Activated CD8-positive, alpha-beta T cell treated with anti-CD3 and anti-CD28 coated beads, Interleukin-2, amount 10 ng/mL, durations not matched to agents 7 days and 5 days (primary cell): ENCODE measurements at regions of chr1 and their contacts with region 1.

Region 1: DNA sequence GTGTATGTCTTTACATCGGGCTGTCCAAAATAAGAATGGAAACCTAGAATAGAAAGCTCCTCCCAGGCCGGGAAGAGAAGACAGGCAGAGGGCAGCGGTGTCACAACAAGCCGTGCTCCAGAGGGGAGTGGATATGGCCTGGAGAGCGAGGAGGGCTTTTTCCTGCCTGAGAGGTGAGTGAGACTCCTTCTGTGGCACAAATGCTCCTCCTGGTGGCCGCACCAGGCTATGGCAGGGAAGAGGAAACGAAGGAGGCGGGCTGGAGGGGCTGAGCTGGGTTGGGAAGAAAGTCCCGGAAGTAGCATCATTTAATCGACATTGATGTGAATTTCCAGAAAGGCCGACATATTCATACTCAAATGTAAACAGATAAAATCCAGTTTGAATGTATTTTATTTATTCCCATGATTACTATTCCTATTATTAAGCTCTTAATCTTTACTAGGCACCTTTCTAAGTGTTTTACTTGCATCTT is 54.7 kb downstream of the MEF2D start:
- DNase-seq: peak; percentile 84
- ATAC-seq: peak; percentile 89
- H3K4me3 Mint-ChIP-seq: no peak overlapping the region
- H3K27ac Mint-ChIP-seq: no peak overlapping the region
- H3K4me1 Mint-ChIP-seq: peaks cover 9% of the 10 kb centered on the region
- H3K27me3 Mint-ChIP-seq: peaks cover 57% of the 10 kb centered on the region

Region 2: DNA sequence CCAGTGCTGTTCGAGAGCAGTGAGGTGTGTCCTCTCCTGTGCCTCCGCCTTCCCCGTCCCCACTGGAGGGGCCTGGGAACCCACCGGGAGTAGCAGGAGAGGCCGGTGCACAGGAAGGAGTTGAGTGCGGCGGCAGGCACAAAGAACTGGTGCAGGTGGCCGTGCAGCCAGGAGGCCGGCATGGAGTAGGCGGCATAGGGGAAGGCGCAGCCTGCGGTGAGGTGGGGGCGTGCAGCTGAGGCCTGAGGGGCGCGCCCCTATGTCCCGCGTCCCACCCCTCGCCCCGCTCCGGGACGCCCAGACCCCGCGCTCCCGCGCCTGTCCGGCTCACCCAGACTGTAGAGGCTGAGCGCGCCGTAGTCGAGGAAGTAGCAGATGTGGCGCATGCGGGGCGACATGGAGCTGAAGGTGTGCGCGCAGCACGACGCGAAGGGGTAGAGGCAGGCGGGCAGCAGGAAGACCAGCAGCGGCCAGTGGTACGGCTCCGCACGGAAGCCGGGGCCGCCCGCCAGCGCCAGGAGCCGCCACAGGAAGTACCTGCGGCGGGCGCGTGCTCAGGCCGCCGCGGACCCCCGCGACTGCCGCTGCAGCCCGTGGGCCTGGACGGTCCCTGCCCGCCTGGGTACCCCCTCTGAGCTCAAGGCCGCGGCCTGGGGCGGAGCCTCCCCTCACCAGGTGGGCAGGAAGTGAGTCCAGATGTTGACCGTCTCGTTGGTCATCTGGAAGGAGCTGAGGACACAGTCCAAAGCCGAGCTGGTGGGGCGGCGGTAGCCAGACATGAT is 200.2 kb before region 1 on chr1:
- CTCF ChIA-PET with region 1: no interaction called
- POLR2A ChIA-PET with region 1: no interaction called
- DNase-seq: peak; percentile 65
- ATAC-seq: peak; percentile 82
- H3K4me3 Mint-ChIP-seq: peak overlapping the region; percentile 75
- H3K27ac Mint-ChIP-seq: peak overlapping the region; percentile 93
- H3K4me1 Mint-ChIP-seq: peaks cover 37% of the 10 kb centered on the region
- H3K27me3 Mint-ChIP-seq: no peaks in the 10 kb centered on the region

Region 3: GRCh38 chr1:156262461-156263287 is 183.2 kb before region 1 on chr1:
- CTCF ChIA-PET with region 1: no interaction called
- POLR2A ChIA-PET with region 1: no interaction called
- DNase-seq: no peak
- ATAC-seq: no peak
- H3K4me3 Mint-ChIP-seq: no peak overlapping the region
- H3K27ac Mint-ChIP-seq: peak overlapping the region; percentile 2
- H3K4me1 Mint-ChIP-seq: peaks cover 7% of the 10 kb centered on the region
- H3K27me3 Mint-ChIP-seq: no peaks in the 10 kb centered on the region

Region 4: DNA sequence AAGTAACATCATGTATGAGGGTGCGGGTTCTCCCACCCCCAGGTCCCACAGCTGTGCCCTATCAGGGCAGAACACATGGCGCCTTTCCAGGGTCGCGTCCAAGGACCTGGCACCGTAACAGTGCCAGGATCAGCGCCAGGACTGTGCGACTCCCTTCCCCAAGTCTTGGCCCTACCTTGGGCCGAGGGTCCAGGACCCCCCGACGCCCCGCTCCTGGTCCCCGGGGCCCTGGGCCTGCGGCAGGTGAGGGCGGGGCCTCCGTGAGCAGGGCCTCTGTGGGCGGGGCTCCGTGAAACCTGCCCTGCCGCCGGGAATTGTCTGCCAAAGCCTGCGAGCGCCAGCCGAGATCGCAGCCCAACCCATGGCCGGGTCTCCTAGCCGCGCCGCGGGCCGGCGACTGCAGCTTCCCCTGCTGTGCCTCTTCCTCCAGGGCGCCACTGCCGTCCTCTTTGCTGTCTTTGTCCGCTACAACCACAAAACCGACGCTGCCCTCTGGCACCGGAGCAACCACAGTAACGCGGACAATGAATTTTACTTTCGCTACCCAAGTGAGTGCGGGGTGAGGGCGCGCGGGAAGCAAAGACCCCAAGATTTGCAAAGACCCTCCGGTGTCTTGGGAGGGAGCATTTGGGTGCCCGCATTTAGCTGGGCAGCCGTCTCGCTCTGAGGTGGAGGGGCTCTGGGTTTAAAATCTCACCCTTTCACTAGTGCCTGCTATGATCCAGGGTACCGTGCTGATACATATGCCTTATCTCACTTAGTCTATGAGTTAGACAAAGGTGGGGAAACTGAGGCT is 76.7 kb before region 1 on chr1 and contains the start of gene RHBG:
- CTCF ChIA-PET with region 1: interaction called, 12 read pairs
- POLR2A ChIA-PET with region 1: no interaction called
- DNase-seq: no peak
- ATAC-seq: peak; percentile 56
- H3K4me3 Mint-ChIP-seq: peak within 1 kb of the TSS; percentile 34
- H3K27ac Mint-ChIP-seq: no peak within 1 kb of the TSS
- H3K4me1 Mint-ChIP-seq: peaks cover 4% of the 10 kb centered on the region
- H3K27me3 Mint-ChIP-seq: peaks cover 58% of the 10 kb centered on the region
- total RNA-seq, gene RHBG: not detected

Region 5: DNA sequence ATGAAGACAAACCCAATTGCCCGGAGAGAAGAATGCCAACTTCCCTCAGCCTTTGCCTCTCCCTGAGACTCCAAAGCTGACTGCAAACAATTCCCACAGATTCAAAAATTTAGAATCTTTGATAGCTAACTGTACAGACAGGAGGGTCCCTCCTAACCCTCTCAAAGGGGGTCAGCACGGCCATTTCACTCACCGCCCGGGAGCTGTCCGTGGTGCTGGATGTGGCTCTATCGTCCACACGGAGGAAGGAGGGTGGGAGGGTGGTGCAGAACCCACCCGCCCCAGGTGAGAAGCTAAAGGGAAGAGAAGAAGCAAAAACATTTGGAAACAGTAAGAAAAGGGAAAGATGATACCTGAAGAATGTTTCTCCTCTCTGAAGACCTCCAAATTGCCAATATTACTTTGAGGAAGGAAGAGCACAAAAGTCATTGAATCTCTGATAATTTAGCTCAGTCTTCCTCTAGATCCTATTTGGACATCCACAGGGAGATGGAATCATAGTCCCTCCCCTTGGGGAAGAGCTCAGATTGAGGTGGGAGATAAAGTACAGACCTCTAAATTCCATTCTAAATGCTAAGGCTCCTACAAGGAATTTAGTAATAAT is 31.3 kb before region 1 on chr1:
- CTCF ChIA-PET with region 1: interaction called, 17 read pairs
- POLR2A ChIA-PET with region 1: interaction called, 3 read pairs
- DNase-seq: peak; percentile 53
- ATAC-seq: no peak
- H3K4me3 Mint-ChIP-seq: no peak overlapping the region
- H3K27ac Mint-ChIP-seq: no peak overlapping the region
- H3K4me1 Mint-ChIP-seq: peaks cover under 1% of the 10 kb centered on the region
- H3K27me3 Mint-ChIP-seq: peaks cover 53% of the 10 kb centered on the region

Region 6: GRCh38 chr1:156435545-156436141 is 10.2 kb before region 1 on chr1:
- CTCF ChIA-PET with region 1: interaction called, 42 read pairs
- POLR2A ChIA-PET with region 1: no interaction called
- DNase-seq: no peak
- ATAC-seq: peak; percentile 36
- H3K4me3 Mint-ChIP-seq: peak overlapping the region; percentile 66
- H3K27ac Mint-ChIP-seq: no peak overlapping the region
- H3K4me1 Mint-ChIP-seq: peaks cover 24% of the 10 kb centered on the region
- H3K27me3 Mint-ChIP-seq: peaks cover 87% of the 10 kb centered on the region

Region 7: GRCh38 chr1:156465747-156466365 is 20.0 kb after region 1 on chr1:
- CTCF ChIA-PET with region 1: interaction called, 12 read pairs
- POLR2A ChIA-PET with region 1: no interaction called
- DNase-seq: no peak
- ATAC-seq: no peak
- H3K4me3 Mint-ChIP-seq: no peak overlapping the region
- H3K27ac Mint-ChIP-seq: no peak overlapping the region
- H3K4me1 Mint-ChIP-seq: peaks cover 12% of the 10 kb centered on the region
- H3K27me3 Mint-ChIP-seq: no peaks in the 10 kb centered on the region

Region 8: GRCh38 chr1:156583821-156584622 is 138.2 kb after region 1 on chr1:
- CTCF ChIA-PET with region 1: interaction called, 16 read pairs
- POLR2A ChIA-PET with region 1: no interaction called
- DNase-seq: peak; percentile 88
- ATAC-seq: peak; percentile 17
- H3K4me3 Mint-ChIP-seq: peak overlapping the region; percentile 86
- H3K27ac Mint-ChIP-seq: peak overlapping the region; percentile 93
- H3K4me1 Mint-ChIP-seq: peaks cover 39% of the 10 kb centered on the region
- H3K27me3 Mint-ChIP-seq: no peaks in the 10 kb centered on the region